Astrocyte of the cerebellum (primary cell): ENCODE measurements at regions of chr17 and their contacts with region 1.

Region 1: GRCh38 chr17:45311760-45312476 is 4.9 kb downstream of the MAP3K14 start:
- DNase-seq: no peak
- H3K4me3 ChIP-seq: peak overlapping the region; percentile 96
- CTCF ChIP-seq: no peak

Region 2: DNA sequence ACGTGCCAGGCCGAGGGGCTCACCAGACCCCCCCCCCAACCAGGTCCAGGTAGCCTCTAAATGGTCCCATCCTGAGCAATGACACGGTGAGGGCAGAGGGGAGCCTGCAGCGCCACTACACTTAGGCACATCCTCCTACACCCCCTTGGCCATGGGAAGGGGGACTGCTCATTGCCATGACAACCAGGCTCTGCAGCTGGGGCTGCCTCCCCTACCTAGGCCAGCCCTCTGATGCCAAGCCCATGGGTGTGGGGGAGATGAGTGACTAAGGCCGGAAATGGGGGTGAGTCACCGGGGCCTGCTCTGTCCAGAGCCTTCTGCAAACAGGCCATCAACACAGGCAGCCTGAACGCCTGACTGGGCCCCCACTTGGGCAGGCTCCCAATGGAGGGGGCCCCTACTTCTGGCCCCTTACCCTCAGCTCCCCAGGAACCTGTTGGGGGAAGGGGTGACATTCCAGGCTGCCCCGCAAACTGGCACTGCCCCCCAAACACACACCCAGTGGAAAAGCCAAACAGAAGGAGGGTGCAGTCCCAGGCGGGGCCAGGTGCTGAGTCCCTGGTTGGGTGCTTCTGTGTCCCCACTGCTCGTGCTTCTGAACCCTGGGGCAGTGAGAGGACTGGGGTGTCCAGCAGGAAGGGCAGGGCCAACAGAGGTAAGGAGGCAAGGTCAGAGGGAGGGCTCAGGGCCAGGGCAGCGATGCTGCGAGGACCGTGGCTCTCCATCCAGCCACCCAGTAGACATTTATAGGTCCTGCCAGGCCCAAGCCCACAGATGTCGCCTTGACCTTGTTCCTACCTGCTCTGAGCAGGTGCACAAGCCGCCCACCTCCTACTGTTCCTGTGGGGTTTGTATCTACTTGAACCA is 187.8 kb before region 1 on chr17:
- in situ Hi-C with region 1: no loop called
- DNase-seq: peak; percentile 65
- H3K4me3 ChIP-seq: no peak overlapping the region
- CTCF ChIP-seq: no peak

Region 3: GRCh38 chr17:45218895-45219661 is 92.8 kb before region 1 on chr17:
- in situ Hi-C with region 1: no loop called
- DNase-seq: peak; percentile 68
- H3K4me3 ChIP-seq: no peak overlapping the region
- CTCF ChIP-seq: peak; percentile 89

Region 4: DNA sequence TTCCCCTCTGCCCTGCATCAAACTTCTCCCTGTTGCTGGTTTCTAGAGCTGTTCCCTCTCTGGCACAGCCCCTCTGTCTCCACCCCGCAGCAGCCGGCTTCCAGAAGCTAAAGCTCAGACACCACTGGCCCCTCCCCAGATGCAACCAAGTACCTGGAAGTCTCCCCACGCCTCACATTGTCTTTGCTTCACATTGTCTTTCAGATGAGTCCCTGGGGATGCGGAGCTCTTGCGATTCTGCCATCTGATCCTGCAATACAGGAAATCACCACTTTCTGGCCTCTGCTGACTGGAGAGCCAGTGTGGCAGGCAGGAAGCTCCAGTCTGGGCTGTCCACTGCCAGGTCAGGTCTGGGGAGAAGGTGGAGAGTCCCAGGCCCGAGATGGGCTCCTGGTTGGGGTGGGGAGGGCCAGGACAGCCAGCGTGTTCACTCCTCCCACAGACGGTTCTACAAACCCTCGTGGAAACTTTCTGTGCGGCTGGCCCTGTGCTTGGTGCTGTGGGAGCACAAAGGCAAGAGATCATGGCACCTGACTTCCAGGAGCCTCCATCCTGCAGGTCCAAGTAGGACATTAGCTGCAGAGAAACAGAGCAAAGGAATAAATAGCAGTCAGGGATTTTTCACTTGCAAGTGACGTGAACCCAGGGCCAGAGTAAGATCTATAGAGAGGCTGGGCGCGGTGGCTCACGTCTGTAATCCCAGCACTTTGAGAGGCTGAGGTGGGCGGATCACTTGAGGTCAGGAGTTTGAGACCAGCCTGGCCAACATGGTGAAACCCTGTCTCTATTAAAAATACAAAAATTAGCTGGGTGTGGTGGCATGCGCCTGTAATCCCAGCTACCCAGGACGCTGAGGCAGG is 52.8 kb after region 1 on chr17:
- in situ Hi-C with region 1: loop called (anchors 5 kb)
- DNase-seq: no peak
- H3K4me3 ChIP-seq: no peak overlapping the region
- CTCF ChIP-seq: no peak